ENCODE measurements at regions of chr10 and their contacts with region 1.

Region 1: DNA sequence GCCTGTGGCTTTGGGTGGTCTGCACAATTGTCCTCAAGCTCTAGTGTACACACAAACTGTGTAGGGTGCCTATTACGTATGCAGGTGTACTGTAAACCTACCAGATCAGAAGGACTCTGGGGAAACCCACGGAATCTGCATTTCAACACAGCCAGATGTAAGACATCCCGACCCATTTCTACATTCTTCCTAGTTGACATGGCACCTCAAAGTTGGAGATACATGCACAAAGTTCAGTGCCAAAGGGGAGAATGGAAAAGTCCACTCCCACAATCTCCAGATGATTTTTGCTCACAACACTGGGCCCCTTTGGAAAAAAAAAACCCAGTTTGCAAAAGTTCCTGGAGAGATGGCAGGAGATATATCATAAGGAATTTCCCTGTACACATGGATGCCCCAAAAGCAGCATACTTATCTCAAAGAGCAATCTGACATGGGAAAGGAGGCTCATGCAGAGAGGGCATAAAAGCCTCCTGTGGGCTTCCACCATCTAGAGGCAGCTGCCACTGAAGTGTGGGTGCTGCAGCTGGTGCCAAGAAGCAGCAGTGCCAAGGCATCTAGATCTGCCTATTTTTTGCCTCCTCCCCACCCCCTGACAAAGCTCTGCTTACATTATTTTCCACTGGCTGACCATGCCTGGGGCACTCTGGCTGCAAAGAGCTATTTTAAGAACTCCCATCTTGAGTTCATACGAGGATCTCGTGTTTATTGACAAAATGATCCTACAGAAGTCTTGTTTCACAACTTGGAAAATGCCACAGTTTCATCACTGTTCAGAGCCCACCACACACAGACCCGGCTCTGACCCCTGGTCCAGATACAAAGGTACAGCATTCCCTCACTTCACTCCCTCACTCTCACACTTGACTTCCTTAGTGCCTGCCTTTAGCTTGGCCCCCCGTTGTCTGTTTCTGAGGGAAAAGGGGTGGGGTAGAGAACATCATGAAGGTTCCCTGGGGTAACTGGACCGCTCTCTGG is 12.9 kb downstream of the TECTB start:
- DNase-seq: no peak
- ATAC-seq: no peak
- H3K4me3 ChIP-seq: no peak overlapping the region
- H3K27ac ChIP-seq: no peak overlapping the region
- H3K4me1 ChIP-seq: no peaks in the 10 kb centered on the region
- H3K27me3 ChIP-seq: peaks cover 6% of the 10 kb centered on the region
- CTCF ChIP-seq: no peak

Region 2: GRCh38 chr10:112307358-112308124 is 11.4 kb after region 1 on chr10:
- CTCF ChIA-PET with region 1: interaction called, 10 read pairs
- POLR2A ChIA-PET with region 1: no interaction called
- in situ Hi-C with region 1: no loop called
- intact Hi-C with region 1: no loop called
- DNase-seq: no peak
- ATAC-seq: peak; percentile 91
- H3K4me3 ChIP-seq: no peak overlapping the region
- H3K27ac ChIP-seq: no peak overlapping the region
- H3K4me1 ChIP-seq: no peaks in the 10 kb centered on the region
- H3K27me3 ChIP-seq: peaks cover 22% of the 10 kb centered on the region
- CTCF ChIP-seq: peak; percentile 95

Region 3: GRCh38 chr10:112375721-112376395 is 79.7 kb after region 1 on chr10:
- CTCF ChIA-PET with region 1: no interaction called
- POLR2A ChIA-PET with region 1: no interaction called
- in situ Hi-C with region 1: no loop called
- intact Hi-C with region 1: no loop called
- DNase-seq: no peak
- ATAC-seq: peak; percentile 41; the same call in 1 of the 2 replicates
- H3K4me3 ChIP-seq: peak overlapping the region in 1 of 2 experiments; percentile 28; a peak in 2 of 4 replicates
- H3K27ac ChIP-seq: peak overlapping the region; percentile 42
- H3K4me1 ChIP-seq: peaks cover 4% of the 10 kb centered on the region; the same call in 1 of the 2 replicates
- H3K27me3 ChIP-seq: no peaks in the 10 kb centered on the region
- CTCF ChIP-seq: no peak

Measured in Panc1 (cell line).